ENCODE measurements at regions of chr7 and their contacts with region 1.

Region 1: GRCh38 chr7:157875230-157876179 is 538.7 kb downstream of the DNAJB6 start:
- DNase-seq: peak; percentile 81
- H3K4me3 ChIP-seq: peak overlapping the region in 3 of 8 donors; percentile 2 to 45 (median 10)
- H3K27ac ChIP-seq: peak overlapping the region in 1 of 8 donors; percentile 28
- H3K4me1 ChIP-seq: peaks cover 0 to 26% (median 15%) of the 10 kb centered on the region in 6 donors
- H3K27me3 ChIP-seq: peaks cover 0 to 45% (median 0%) of the 10 kb centered on the region in 7 donors
- CTCF ChIP-seq: peak; percentile 33 to 76 (median 64)
- POLR2A ChIP-seq: no peak

Region 2: GRCh38 chr7:157432957-157433576 is 442.4 kb before region 1 on chr7:
- intact Hi-C with region 1: loop called (anchors 5 kb)
- DNase-seq: peak; percentile 77
- H3K4me3 ChIP-seq: peak overlapping the region in 4 of 8 donors; percentile 8 to 37 (median 20)
- H3K27ac ChIP-seq: no peak overlapping the region
- H3K4me1 ChIP-seq: peaks cover 7 to 13% (median 10%) of the 10 kb centered on the region in 6 donors
- H3K27me3 ChIP-seq: peaks cover 0 to 8% (median 0%) of the 10 kb centered on the region in 7 donors
- CTCF ChIP-seq: peak; percentile 47 to 77 (median 74)
- POLR2A ChIP-seq: no peak

Region 3: GRCh38 chr7:158143196-158144120 is 268.0 kb after region 1 on chr7:
- intact Hi-C with region 1: no loop called
- DNase-seq: no peak
- H3K4me3 ChIP-seq: no peak overlapping the region
- H3K27ac ChIP-seq: no peak overlapping the region
- H3K4me1 ChIP-seq: no peaks in the 10 kb centered on the region
- H3K27me3 ChIP-seq: no peaks in the 10 kb centered on the region
- CTCF ChIP-seq: no peak
- POLR2A ChIP-seq: no peak